ENCODE measurements at regions of chr2 and their contacts with region 1.

Region 1: DNA sequence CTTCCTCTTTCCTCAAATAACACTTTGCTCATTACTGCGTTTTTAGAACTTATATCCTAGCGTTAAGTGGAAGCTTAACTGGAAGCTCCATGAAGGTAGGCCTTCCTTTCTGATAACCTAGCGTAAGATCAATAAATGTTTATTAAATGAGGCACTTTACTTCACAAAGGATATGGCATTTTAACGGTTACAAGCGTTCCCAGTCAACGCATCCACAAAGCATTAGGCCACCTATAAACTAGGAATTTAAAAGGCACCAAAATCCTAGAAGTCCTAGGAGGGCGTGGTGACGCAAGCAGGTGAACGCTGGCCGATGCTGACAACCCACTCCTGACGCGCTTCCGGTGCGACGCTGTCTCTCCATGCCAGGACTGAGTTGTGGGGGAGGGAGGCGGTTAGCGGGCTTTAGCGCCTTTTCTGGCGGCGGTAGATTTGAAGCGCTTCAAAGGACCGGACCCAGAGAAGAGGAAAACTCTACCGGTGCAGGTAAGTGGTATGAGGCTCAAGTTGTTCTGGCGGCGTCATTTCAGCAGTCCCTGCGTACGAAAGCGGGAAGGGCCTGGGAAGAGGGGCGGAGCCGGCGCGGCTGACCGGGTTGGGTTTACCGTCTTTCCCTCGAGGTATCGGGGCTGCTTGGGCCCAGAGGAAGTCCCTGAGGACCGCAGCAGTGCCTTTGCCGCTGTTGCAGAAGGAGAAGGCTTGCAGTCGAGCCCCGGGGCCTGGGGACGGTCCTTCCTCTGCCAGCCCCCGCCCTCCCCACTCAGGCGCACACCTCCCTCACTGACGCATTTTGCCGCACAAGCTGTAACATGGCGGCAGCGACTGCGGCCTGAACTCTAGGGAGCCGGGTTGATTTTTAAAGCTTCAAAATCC is at the start of gene PPIG:
- DNase-seq: peak; percentile 88 to 91
- ATAC-seq: peak; percentile 96 to 99 (median 98)
- H3K4me3 ChIP-seq: peak within 1 kb of the TSS; percentile 53 to 95 (median 84)
- H3K27ac ChIP-seq: peak within 1 kb of the TSS; percentile 94 to 99 (median 98)
- H3K4me1 ChIP-seq: peaks cover 5 to 43% (median 25%) of the 10 kb centered on the region in 9 donors
- H3K27me3 ChIP-seq: no peaks in the 10 kb centered on the region
- CTCF ChIP-seq: no peak
- total RNA-seq, gene PPIG: 34.8 to 50.1 (median 40.9) TPM

Region 2: GRCh38 chr2:169798718-169799592 is 214.7 kb after region 1 on chr2 and contains the start of gene SSB:
- intact Hi-C with region 1: loop called in 1 of 10 experiments (anchors 5 kb)
- DNase-seq: peak; percentile 93 to 96
- ATAC-seq: peak; percentile 99 to 100 (median 100)
- H3K4me3 ChIP-seq: peak within 1 kb of the TSS; percentile 63 to 95 (median 84)
- H3K27ac ChIP-seq: peak within 1 kb of the TSS; percentile 39 to 90 (median 86)
- H3K4me1 ChIP-seq: peaks cover 0 to 33% (median 18%) of the 10 kb centered on the region in 9 donors
- H3K27me3 ChIP-seq: no peaks in the 10 kb centered on the region
- CTCF ChIP-seq: peak in 1 of 9 donors; percentile 14
- total RNA-seq, gene SSB: 45.7 to 66.3 (median 55.3) TPM

Measured in heart right ventricle (tissue), 16 donors.